Tibial artery (tissue), 4 donors: ENCODE measurements at regions of chr11 and their contacts with region 1.

Region 1: GRCh38 chr11:10933455-10934292 is 75.8 kb upstream of the ZBED5 start:
- DNase-seq: peak; percentile 93 to 95
- H3K4me3 ChIP-seq: peak overlapping the region; percentile 49 to 61
- H3K27ac ChIP-seq: peak overlapping the region; percentile 87 to 99
- H3K4me1 ChIP-seq: peaks cover 0 to 32% (median 12%) of the 10 kb centered on the region in 4 donors
- H3K27me3 ChIP-seq: no peaks in the 10 kb centered on the region
- CTCF ChIP-seq: peak; percentile 94 to 97

Region 2: GRCh38 chr11:9493492-9493891 is 1440.2 kb before region 1 on chr11:
- intact Hi-C with region 1: loop called (anchors 5 kb)
- DNase-seq: no peak
- H3K4me3 ChIP-seq: no peak overlapping the region
- H3K27ac ChIP-seq: no peak overlapping the region
- H3K4me1 ChIP-seq: peaks cover 0 to 19% (median 7%) of the 10 kb centered on the region in 4 donors
- H3K27me3 ChIP-seq: no peaks in the 10 kb centered on the region
- CTCF ChIP-seq: no peak

Region 3: GRCh38 chr11:10285148-10285802 is 648.4 kb before region 1 on chr11:
- intact Hi-C with region 1: no loop called
- DNase-seq: no peak
- H3K4me3 ChIP-seq: no peak overlapping the region
- H3K27ac ChIP-seq: no peak overlapping the region
- H3K4me1 ChIP-seq: peaks cover 0 to 28% (median 13%) of the 10 kb centered on the region in 4 donors
- H3K27me3 ChIP-seq: no peaks in the 10 kb centered on the region
- CTCF ChIP-seq: no peak

Region 4: GRCh38 chr11:10808553-10809372 is 124.9 kb before region 1 on chr11 and contains the start of gene EIF4G2:
- intact Hi-C with region 1: loop called (anchors 2 kb)
- DNase-seq: peak; percentile 98 to 99
- H3K4me3 ChIP-seq: peak within 1 kb of the TSS; percentile 93 to 98
- H3K27ac ChIP-seq: peak within 1 kb of the TSS; percentile 100
- H3K4me1 ChIP-seq: peaks cover 0 to 43% (median 29%) of the 10 kb centered on the region in 4 donors
- H3K27me3 ChIP-seq: no peaks in the 10 kb centered on the region
- CTCF ChIP-seq: peak in 1 of 2 experiments; percentile 25

Region 5: GRCh38 chr11:10857709-10858438 is 75.8 kb before region 1 on chr11 and contains the start of gene ZBED5:
- intact Hi-C with region 1: loop called (anchors 5 kb)
- DNase-seq: peak; percentile 98 to 99
- H3K4me3 ChIP-seq: peak within 1 kb of the TSS; percentile 63 to 64
- H3K27ac ChIP-seq: peak within 1 kb of the TSS; percentile 91 to 94
- H3K4me1 ChIP-seq: peaks cover 0 to 60% (median 31%) of the 10 kb centered on the region in 4 donors
- H3K27me3 ChIP-seq: no peaks in the 10 kb centered on the region
- CTCF ChIP-seq: peak; percentile 8 to 24

Region 6: GRCh38 chr11:11016068-11016467 is 82.4 kb after region 1 on chr11:
- intact Hi-C with region 1: loop called (anchors 5 kb)
- DNase-seq: no peak
- H3K4me3 ChIP-seq: no peak overlapping the region
- H3K27ac ChIP-seq: no peak overlapping the region
- H3K4me1 ChIP-seq: no peaks in the 10 kb centered on the region
- H3K27me3 ChIP-seq: no peaks in the 10 kb centered on the region
- CTCF ChIP-seq: no peak

Region 7: DNA sequence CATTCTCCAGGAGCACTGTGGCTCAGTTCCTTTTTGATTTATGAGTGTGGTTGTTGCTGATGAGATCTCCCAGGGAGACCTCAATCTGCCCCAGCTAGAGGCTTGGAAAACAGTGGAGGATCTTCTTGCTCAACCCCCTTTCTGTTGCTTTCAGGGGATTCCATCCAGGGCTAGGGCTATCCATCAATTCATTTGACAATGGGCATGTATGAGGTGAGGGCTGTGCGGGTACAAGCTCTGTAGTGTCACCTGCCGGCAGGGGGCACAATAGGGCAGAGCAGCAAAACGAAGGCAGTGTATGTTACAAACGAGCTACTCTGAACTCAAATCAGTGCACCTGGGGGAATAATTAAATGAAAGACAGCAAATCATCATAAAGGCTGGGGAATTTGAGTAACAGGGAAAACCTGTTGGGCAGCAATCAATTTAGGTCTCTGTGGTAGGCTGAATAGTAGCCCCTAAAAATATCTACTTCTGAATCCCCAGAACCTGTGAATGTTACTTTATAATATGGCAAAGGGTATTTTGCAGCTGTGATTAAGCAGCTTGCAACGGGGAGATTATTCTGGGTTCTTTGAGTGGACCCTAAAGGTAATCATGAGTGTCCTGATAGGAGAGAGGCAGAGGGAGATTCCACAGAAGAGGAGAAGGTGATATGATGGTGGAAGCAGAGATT is 94.5 kb after region 1 on chr11:
- intact Hi-C with region 1: no loop called
- DNase-seq: peak; percentile 70 to 84
- H3K4me3 ChIP-seq: no peak overlapping the region
- H3K27ac ChIP-seq: no peak overlapping the region
- H3K4me1 ChIP-seq: no peaks in the 10 kb centered on the region
- H3K27me3 ChIP-seq: no peaks in the 10 kb centered on the region
- CTCF ChIP-seq: peak; percentile 79 to 81

Region 8: GRCh38 chr11:11787305-11788062 is 853.8 kb after region 1 on chr11:
- intact Hi-C with region 1: loop called (anchors 5 kb)
- DNase-seq: peak; percentile 70 to 79
- H3K4me3 ChIP-seq: no peak overlapping the region
- H3K27ac ChIP-seq: no peak overlapping the region
- H3K4me1 ChIP-seq: no peaks in the 10 kb centered on the region
- H3K27me3 ChIP-seq: no peaks in the 10 kb centered on the region
- CTCF ChIP-seq: peak; percentile 83 to 93